GM23248 (cell line): ENCODE measurements at regions of chr15 and their contacts with region 1.

Region 1: GRCh38 chr15:57054204-57054750 is 135.8 kb downstream of the TCF12 start:
- DNase-seq: no peak
- H3K4me3 ChIP-seq: no peak overlapping the region
- H3K27ac ChIP-seq: no peak overlapping the region
- H3K4me1 ChIP-seq: peaks cover 38% of the 10 kb centered on the region
- H3K27me3 ChIP-seq: no peaks in the 10 kb centered on the region

Region 2: DNA sequence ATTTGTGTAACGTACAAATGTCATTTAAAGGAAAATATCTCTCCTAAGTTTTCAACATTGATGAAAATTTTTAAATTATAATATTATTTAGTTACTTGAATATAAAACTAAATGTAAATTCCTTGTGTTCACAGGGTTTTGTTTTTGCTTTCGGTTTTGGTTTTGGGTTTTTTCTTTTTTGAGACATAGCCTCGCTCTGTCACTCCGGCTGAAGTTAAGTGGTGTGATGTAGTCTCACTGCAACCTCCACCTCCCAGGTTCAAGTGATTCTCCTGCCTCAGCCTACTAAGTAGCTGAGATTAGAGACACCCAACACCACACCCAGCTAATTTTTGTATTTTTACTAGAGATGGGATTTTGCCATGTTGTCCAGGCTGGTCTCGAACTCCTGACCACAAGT is 215.2 kb before region 1 on chr15:
- in situ Hi-C with region 1: no loop called
- DNase-seq: no peak
- H3K4me3 ChIP-seq: no peak overlapping the region
- H3K27ac ChIP-seq: no peak overlapping the region
- H3K4me1 ChIP-seq: peaks cover 18% of the 10 kb centered on the region
- H3K27me3 ChIP-seq: no peaks in the 10 kb centered on the region

Region 3: DNA sequence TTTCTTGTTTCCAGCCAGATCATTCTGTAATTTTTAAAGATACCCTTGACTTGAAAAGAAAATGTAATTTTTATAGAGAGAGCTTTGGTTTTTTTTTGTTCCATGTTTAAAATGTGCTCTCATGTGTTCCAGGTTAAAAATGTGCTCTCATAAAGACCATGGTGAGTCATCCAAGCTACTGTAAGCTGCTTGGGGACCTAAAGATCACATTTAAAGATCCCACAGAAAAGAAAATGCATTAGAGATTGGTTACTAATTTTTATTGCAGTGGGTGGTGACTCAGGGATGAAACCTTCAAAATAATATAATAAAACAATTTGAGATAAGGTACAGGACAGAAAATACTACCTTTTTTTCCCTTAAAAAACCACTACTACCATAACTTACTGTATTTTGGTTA is 124.9 kb before region 1 on chr15:
- in situ Hi-C with region 1: no loop called
- DNase-seq: peak; percentile 74
- H3K4me3 ChIP-seq: no peak overlapping the region
- H3K27ac ChIP-seq: peak overlapping the region; percentile 12
- H3K4me1 ChIP-seq: peaks cover 34% of the 10 kb centered on the region
- H3K27me3 ChIP-seq: no peaks in the 10 kb centered on the region

Region 4: GRCh38 chr15:56992725-56993124 is 61.6 kb before region 1 on chr15:
- in situ Hi-C with region 1: loop called (anchors 10 kb)
- DNase-seq: no peak
- H3K4me3 ChIP-seq: no peak overlapping the region
- H3K27ac ChIP-seq: no peak overlapping the region
- H3K4me1 ChIP-seq: peaks cover 44% of the 10 kb centered on the region
- H3K27me3 ChIP-seq: no peaks in the 10 kb centered on the region